Heart left ventricle (tissue), 16 donors: ENCODE measurements at regions of chr7 and their contacts with region 1.

Region 1: GRCh38 chr7:70856866-70857630 is 274.9 kb upstream of the GALNT17 start:
- DNase-seq: peak; percentile 34 to 73 (median 50)
- ATAC-seq: peak in 1 of 4 donors; percentile 46
- H3K4me3 ChIP-seq: no peak overlapping the region
- H3K27ac ChIP-seq: no peak overlapping the region
- H3K4me1 ChIP-seq: no peaks in the 10 kb centered on the region
- H3K27me3 ChIP-seq: no peaks in the 10 kb centered on the region
- CTCF ChIP-seq: peak; percentile 77 to 97 (median 91)
- POLR2A ChIP-seq: no peak

Region 2: GRCh38 chr7:71106226-71106625 is 249.2 kb after region 1 on chr7:
- intact Hi-C with region 1: loop called in 1 of 10 experiments (anchors 10 kb)
- DNase-seq: no peak
- ATAC-seq: no peak
- H3K4me3 ChIP-seq: no peak overlapping the region
- H3K27ac ChIP-seq: no peak overlapping the region
- H3K4me1 ChIP-seq: no peaks in the 10 kb centered on the region
- H3K27me3 ChIP-seq: no peaks in the 10 kb centered on the region
- CTCF ChIP-seq: no peak
- POLR2A ChIP-seq: no peak

Region 3: DNA sequence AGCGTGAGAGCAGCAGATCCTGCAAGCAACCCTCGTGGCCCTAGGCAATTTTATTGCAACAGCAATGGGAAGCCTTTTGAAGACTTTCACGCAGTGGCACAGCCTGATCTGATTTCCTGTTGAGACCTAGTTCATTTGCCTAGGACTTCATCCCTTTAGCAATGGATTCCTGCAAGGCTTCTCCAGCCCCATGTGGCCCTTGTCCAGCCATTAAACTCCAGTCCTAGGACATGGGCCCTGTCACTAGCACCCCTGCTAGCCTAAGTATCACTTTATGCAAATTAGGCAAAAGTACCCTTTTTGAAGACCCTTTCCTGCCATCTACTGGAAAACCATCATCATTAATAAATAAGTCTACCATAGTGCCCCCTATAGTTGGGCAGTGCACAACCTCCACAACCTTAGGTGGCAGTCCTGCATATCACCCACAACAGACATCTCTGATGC is 654.3 kb after region 1 on chr7:
- intact Hi-C with region 1: loop called in 2 of 10 experiments (anchors 10 kb)
- DNase-seq: no peak
- ATAC-seq: peak in 1 of 4 donors; percentile 30
- H3K4me3 ChIP-seq: no peak overlapping the region
- H3K27ac ChIP-seq: no peak overlapping the region
- H3K4me1 ChIP-seq: no peaks in the 10 kb centered on the region
- H3K27me3 ChIP-seq: no peaks in the 10 kb centered on the region
- CTCF ChIP-seq: peak in 2 of 12 donors; percentile 16 to 29
- POLR2A ChIP-seq: no peak

Region 4: DNA sequence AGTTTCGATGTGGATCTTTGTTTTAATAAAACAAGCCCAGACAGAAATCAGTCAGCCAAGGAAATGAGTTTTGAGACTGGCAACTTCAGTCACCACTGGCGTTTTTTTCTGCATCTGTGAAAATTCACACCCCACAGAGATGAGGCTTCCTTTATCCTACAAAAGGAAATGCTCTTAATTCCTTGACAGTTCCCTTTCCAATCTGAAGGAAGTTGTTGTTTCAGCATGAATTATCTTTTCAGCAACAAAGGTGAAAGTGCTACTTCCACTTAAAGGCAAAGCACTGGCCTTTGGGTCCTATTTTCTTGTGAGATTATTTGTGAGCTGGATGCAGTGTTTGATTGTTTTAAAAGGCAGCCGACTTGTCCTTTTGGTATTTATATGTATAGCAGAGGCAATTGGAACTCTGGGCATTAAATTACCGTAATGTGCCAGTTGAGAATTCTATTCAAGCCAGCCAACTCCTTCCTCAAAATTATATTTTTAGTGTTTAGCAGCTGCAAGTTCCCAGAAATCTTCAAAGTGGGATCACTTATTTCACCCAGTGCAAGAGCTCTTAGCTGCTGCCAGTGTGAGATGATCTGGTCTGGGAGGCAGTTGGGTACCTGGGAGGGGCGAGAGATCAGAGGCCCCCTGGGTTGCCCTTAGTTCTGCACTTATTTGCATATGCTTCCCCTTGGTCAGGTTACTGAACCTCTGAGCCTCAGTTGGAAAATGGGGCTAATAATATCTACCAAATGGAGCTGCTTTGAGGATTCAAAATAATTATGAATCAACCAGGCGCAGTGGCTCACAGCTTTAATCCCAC is 702.0 kb after region 1 on chr7:
- intact Hi-C with region 1: loop called in 1 of 10 experiments (anchors 10 kb)
- DNase-seq: no peak
- ATAC-seq: no peak
- H3K4me3 ChIP-seq: no peak overlapping the region
- H3K27ac ChIP-seq: no peak overlapping the region
- H3K4me1 ChIP-seq: no peaks in the 10 kb centered on the region
- H3K27me3 ChIP-seq: no peaks in the 10 kb centered on the region
- CTCF ChIP-seq: no peak
- POLR2A ChIP-seq: no peak